CD8-positive, alpha-beta T cell (primary cell): ENCODE measurements at regions of chr9 and their contacts with region 1.

Region 1: DNA sequence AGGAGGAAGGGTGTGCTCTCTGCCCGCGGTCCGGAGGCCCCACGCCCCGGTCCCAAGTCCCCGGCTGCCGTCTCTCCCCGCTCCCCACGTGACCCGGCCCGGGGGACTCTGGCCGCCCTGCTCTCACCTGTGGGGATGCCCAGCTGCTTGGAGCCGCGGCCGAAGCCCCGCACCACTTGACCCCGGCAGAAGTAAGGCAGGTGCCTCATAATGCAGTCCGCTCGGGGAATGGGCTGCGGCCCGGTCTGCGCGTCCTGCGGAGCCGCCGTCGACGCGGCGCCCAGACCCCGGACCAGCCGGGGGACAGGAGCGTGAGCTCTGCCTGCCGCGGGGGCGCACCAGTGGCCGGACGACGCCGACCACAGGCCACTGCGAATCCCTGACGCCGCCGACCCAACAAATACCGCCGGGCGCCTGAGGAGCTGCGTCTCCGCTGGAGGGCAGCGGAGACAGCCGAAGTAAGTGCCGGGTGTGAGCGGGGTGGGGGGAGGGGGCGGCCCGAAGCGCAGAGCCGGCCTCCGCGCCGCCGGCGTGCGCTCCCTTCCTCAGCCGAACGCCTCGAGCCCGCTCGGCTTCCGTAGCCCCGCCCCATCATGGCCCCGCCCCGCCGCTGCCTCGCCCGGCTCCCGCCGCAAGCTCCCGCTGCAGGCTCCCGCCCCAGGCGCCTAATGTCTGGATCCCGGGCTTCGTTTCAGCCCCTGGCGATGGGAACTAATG is at the start of gene RFK:
- DNase-seq: peak; percentile 89 to 96 (median 94)
- ATAC-seq: peak; percentile 88
- H3K4me3 ChIP-seq: peak within 1 kb of the TSS; percentile 89 to 96
- H3K4me3 Mint-ChIP-seq: peak within 1 kb of the TSS; percentile 90
- H3K27ac ChIP-seq: peak within 1 kb of the TSS; percentile 87 to 89
- H3K27ac Mint-ChIP-seq: peak within 1 kb of the TSS; percentile 97
- H3K4me1 ChIP-seq: peaks cover 19% of the 10 kb centered on the region
- H3K4me1 Mint-ChIP-seq: peaks cover 40% of the 10 kb centered on the region
- H3K27me3 ChIP-seq: no peaks in the 10 kb centered on the region
- H3K27me3 Mint-ChIP-seq: no peaks in the 10 kb centered on the region
- CTCF ChIP-seq: no peak
- total RNA-seq, gene RFK: 7.9 to 9.9 TPM

Region 2: DNA sequence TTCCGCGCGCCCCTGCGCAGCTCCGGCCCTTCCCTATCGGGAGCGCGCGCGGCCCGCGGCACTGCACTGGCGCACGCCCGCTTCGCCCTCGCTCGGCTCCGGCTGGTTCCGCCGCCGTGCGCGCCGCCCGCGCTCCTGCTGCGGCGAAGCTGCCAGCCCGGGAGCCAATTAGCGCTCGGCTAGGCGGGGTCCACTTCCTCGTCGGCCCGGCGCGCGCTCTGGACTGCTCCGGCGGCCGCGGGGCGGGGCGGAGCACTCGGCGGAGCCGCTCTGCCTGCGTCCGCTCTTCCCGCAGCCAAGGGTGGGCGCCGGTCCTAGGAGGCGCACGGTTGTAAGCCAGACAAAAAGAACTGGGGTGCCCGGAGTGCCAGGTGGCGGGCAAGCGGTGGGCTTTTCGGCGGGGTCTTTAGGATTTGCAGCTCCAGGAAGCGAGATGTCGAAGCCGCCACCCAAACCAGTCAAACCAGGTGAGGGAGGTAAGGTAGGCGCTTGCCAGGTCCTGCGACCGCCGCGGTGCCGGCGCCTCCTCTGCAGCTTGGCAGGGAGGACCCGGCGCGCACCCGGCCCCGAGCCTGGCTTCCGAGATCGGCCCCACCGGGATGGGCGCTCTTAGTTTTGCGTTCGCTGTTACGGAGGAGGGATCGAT is 1305.7 kb before region 1 on chr9 and contains the start of gene OSTF1:
- CTCF ChIA-PET with region 1: no interaction called
- POLR2A ChIA-PET with region 1: interaction called, 7 read pairs
- intact Hi-C with region 1: loop called (anchors 1 to 10 kb)
- DNase-seq: peak; percentile 85 to 98 (median 92)
- ATAC-seq: peak; percentile 78
- H3K4me3 ChIP-seq: peak within 1 kb of the TSS; percentile 92 to 98
- H3K4me3 Mint-ChIP-seq: peak within 1 kb of the TSS; percentile 98
- H3K27ac ChIP-seq: peak within 1 kb of the TSS; percentile 89 to 95
- H3K27ac Mint-ChIP-seq: peak within 1 kb of the TSS; percentile 97
- H3K4me1 ChIP-seq: peaks cover 52% of the 10 kb centered on the region
- H3K4me1 Mint-ChIP-seq: peaks cover 74% of the 10 kb centered on the region
- H3K27me3 ChIP-seq: no peaks in the 10 kb centered on the region
- H3K27me3 Mint-ChIP-seq: no peaks in the 10 kb centered on the region
- CTCF ChIP-seq: no peak
- total RNA-seq, gene OSTF1: 29.1 to 30.3 TPM

Region 3: GRCh38 chr9:76023715-76024195 is 370.4 kb before region 1 on chr9:
- CTCF ChIA-PET with region 1: no interaction called
- POLR2A ChIA-PET with region 1: no interaction called
- intact Hi-C with region 1: loop called (anchors 5 kb)
- DNase-seq: peak in 8 of 9 experiments; percentile 1 to 82 (median 40)
- ATAC-seq: peak; percentile 84
- H3K4me3 ChIP-seq: peak overlapping the region; percentile 3 to 32
- H3K4me3 Mint-ChIP-seq: peak overlapping the region; percentile 80
- H3K27ac ChIP-seq: peak overlapping the region; percentile 26 to 54
- H3K27ac Mint-ChIP-seq: peak overlapping the region; percentile 95
- H3K4me1 ChIP-seq: peaks cover 93% of the 10 kb centered on the region
- H3K4me1 Mint-ChIP-seq: peaks cover 92% of the 10 kb centered on the region
- H3K27me3 ChIP-seq: no peaks in the 10 kb centered on the region
- H3K27me3 Mint-ChIP-seq: no peaks in the 10 kb centered on the region
- CTCF ChIP-seq: no peak

Region 4: GRCh38 chr9:76458903-76459690 is 65.0 kb after region 1 on chr9 and contains the start of gene GCNT1:
- CTCF ChIA-PET with region 1: interaction called, 3 read pairs
- POLR2A ChIA-PET with region 1: interaction called, 6 read pairs
- intact Hi-C with region 1: loop called (anchors 1 to 2 kb)
- DNase-seq: peak; percentile 77 to 93 (median 90)
- ATAC-seq: peak; percentile 95
- H3K4me3 ChIP-seq: peak within 1 kb of the TSS; percentile 69 to 89
- H3K4me3 Mint-ChIP-seq: peak within 1 kb of the TSS; percentile 94
- H3K27ac ChIP-seq: peak within 1 kb of the TSS in 1 of 2 experiments; percentile 31
- H3K27ac Mint-ChIP-seq: peak within 1 kb of the TSS; percentile 72
- H3K4me1 ChIP-seq: peaks cover 11% of the 10 kb centered on the region
- H3K4me1 Mint-ChIP-seq: peaks cover 19% of the 10 kb centered on the region
- H3K27me3 ChIP-seq: no peaks in the 10 kb centered on the region
- H3K27me3 Mint-ChIP-seq: no peaks in the 10 kb centered on the region
- CTCF ChIP-seq: no peak
- total RNA-seq, gene GCNT1: 0.35 to 0.47 TPM

Region 5: GRCh38 chr9:76658535-76659231 is 264.6 kb after region 1 on chr9:
- CTCF ChIA-PET with region 1: interaction called, 5 read pairs
- POLR2A ChIA-PET with region 1: no interaction called
- intact Hi-C with region 1: loop called in 1 of 2 experiments (anchors 5 kb)
- DNase-seq: peak in 2 of 9 experiments; percentile 61 to 71
- ATAC-seq: peak; percentile 67
- H3K4me3 ChIP-seq: no peak overlapping the region
- H3K4me3 Mint-ChIP-seq: no peak overlapping the region
- H3K27ac ChIP-seq: no peak overlapping the region
- H3K27ac Mint-ChIP-seq: no peak overlapping the region
- H3K4me1 ChIP-seq: peaks cover 4% of the 10 kb centered on the region
- H3K4me1 Mint-ChIP-seq: peaks cover 23% of the 10 kb centered on the region
- H3K27me3 ChIP-seq: no peaks in the 10 kb centered on the region
- H3K27me3 Mint-ChIP-seq: no peaks in the 10 kb centered on the region
- CTCF ChIP-seq: peak; percentile 48

Region 6: GRCh38 chr9:77177161-77177893 is 783.2 kb after region 1 on chr9 and contains the start of gene VPS13A:
- CTCF ChIA-PET with region 1: no interaction called
- POLR2A ChIA-PET with region 1: no interaction called
- intact Hi-C with region 1: loop called (anchors 2 kb)
- DNase-seq: peak; percentile 74 to 96 (median 91)
- ATAC-seq: peak; percentile 81
- H3K4me3 ChIP-seq: peak within 1 kb of the TSS; percentile 74 to 92
- H3K4me3 Mint-ChIP-seq: peak within 1 kb of the TSS; percentile 92
- H3K27ac ChIP-seq: peak within 1 kb of the TSS; percentile 72 to 82
- H3K27ac Mint-ChIP-seq: peak within 1 kb of the TSS; percentile 93
- H3K4me1 ChIP-seq: peaks cover 11% of the 10 kb centered on the region
- H3K4me1 Mint-ChIP-seq: peaks cover 40% of the 10 kb centered on the region
- H3K27me3 ChIP-seq: no peaks in the 10 kb centered on the region
- H3K27me3 Mint-ChIP-seq: no peaks in the 10 kb centered on the region
- CTCF ChIP-seq: no peak
- total RNA-seq, gene VPS13A: 35.5 to 37.4 TPM